ENCODE measurements at regions of chr7 and their contacts with region 1.

Region 1: DNA sequence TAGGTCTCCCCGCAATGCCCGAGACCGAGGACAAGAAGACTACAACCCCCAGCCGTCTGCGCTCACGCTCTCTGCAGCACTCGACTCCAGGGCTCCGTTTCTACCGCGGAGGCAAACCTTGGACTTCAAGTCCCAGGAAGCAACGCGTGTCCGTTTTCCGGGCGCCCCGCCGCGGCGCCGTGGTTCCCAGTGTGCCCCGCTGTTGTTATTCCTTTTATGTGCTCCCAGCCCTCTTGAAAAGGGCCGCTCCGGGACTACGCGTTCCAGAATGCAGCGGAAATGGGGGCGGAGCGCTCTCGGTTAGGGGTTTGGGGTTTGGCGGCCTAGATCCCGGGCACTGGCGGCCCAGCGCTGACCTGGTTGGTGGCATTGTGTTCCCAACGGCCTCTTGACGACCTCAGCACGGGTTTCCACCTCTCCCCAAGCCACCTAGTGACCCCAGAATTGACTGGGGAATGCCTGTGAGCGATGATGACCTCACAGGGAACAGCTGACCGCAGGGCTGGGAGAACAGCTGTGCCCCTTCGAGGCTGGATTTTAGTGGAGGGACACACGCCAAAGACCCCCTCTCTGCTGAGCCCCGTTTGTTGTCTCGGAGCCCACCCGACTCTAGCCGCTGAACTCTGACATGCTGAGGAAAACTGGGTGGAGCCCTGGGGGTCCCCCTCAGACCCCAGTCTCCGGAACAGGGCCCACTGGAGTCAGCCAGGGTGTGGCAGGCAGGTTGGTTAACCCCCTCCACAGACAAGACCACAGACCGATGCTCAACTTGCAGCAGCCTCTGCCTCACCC is 488 bp upstream of the CDK5 start:
- DNase-seq: peak; percentile 95 to 99 (median 98)
- H3K4me3 ChIP-seq: peak overlapping the region; percentile 45 to 70
- H3K4me3 Mint-ChIP-seq: peak overlapping the region; percentile 86 to 97 (median 94)
- H3K27ac ChIP-seq: peak overlapping the region; percentile 85
- H3K27ac Mint-ChIP-seq: peak overlapping the region; percentile 85 to 99 (median 96)
- H3K4me1 ChIP-seq: peaks cover 45% of the 10 kb centered on the region
- H3K4me1 Mint-ChIP-seq: peaks cover 18 to 54% (median 37%) of the 10 kb centered on the region in 4 donors
- H3K27me3 ChIP-seq: no peaks in the 10 kb centered on the region
- H3K27me3 Mint-ChIP-seq: peaks cover 0 to 2% of the 10 kb centered on the region in 2 donors

Region 2: GRCh38 chr7:149714050-149714909 is 1343.9 kb before region 1 on chr7:
- CTCF ChIA-PET with region 1: no interaction called
- POLR2A ChIA-PET with region 1: no interaction called
- intact Hi-C with region 1: loop called (anchors 1 kb)
- DNase-seq: peak; percentile 80 to 90 (median 82)
- H3K4me3 ChIP-seq: peak overlapping the region; percentile 60 to 72
- H3K4me3 Mint-ChIP-seq: peak overlapping the region; percentile 76 to 87 (median 83)
- H3K27ac ChIP-seq: peak overlapping the region; percentile 62
- H3K27ac Mint-ChIP-seq: peak overlapping the region in 5 of 7 donors; percentile 35 to 85 (median 64)
- H3K4me1 ChIP-seq: peaks cover 23% of the 10 kb centered on the region
- H3K4me1 Mint-ChIP-seq: peaks cover 16 to 31% (median 18%) of the 10 kb centered on the region in 4 donors
- H3K27me3 ChIP-seq: no peaks in the 10 kb centered on the region
- H3K27me3 Mint-ChIP-seq: no peaks in the 10 kb centered on the region

Region 3: DNA sequence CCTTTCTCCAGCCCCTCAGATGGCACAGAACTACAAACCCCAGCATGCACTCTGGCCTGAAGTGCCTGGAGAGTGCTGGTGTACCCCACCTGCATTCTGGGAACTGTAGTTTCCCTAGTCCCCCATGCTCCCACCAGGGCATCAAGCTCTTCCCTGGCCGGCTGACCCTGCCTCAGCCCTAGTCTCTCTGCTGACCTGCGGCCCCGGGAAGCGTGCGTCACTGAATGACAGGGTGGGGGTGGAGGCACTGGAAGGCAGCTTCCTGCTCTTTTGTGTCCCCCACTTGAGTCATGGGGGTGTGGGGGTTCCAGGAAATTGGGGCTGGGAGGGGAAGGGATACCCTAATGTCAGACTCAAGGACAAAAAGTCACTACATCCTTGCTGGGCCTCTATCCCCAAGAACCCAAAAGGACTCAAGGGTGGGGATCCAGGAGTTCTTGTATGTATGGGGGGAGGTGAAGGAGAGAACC is 65.3 kb before region 1 on chr7:
- CTCF ChIA-PET with region 1: no interaction called
- POLR2A ChIA-PET with region 1: no interaction called
- intact Hi-C with region 1: no loop called
- DNase-seq: peak in 1 of 5 donors; percentile 29
- H3K4me3 ChIP-seq: no peak overlapping the region
- H3K4me3 Mint-ChIP-seq: no peak overlapping the region
- H3K27ac ChIP-seq: no peak overlapping the region
- H3K27ac Mint-ChIP-seq: peak overlapping the region in 2 of 7 donors; percentile 13 to 75
- H3K4me1 ChIP-seq: peaks cover 43% of the 10 kb centered on the region
- H3K4me1 Mint-ChIP-seq: peaks cover 20 to 58% (median 40%) of the 10 kb centered on the region in 4 donors
- H3K27me3 ChIP-seq: no peaks in the 10 kb centered on the region
- H3K27me3 Mint-ChIP-seq: no peaks in the 10 kb centered on the region

Region 4: GRCh38 chr7:151080522-151081169 is 22.5 kb after region 1 on chr7 and contains the start of gene FASTK:
- CTCF ChIA-PET with region 1: interaction called, 3 read pairs
- POLR2A ChIA-PET with region 1: interaction called, 68 read pairs
- intact Hi-C with region 1: loop called (anchors 1 kb)
- DNase-seq: peak; percentile 86 to 92 (median 89)
- H3K4me3 ChIP-seq: peak within 1 kb of the TSS; percentile 91 to 93
- H3K4me3 Mint-ChIP-seq: peak within 1 kb of the TSS; percentile 85 to 92 (median 89)
- H3K27ac ChIP-seq: peak within 1 kb of the TSS; percentile 90
- H3K27ac Mint-ChIP-seq: peak within 1 kb of the TSS; percentile 72 to 97 (median 91)
- H3K4me1 ChIP-seq: peaks cover 52% of the 10 kb centered on the region
- H3K4me1 Mint-ChIP-seq: peaks cover 23 to 57% (median 36%) of the 10 kb centered on the region in 4 donors
- H3K27me3 ChIP-seq: no peaks in the 10 kb centered on the region
- H3K27me3 Mint-ChIP-seq: no peaks in the 10 kb centered on the region
- total RNA-seq, gene FASTK: 123 to 126 TPM

Region 5: GRCh38 chr7:151226875-151227782 is 168.9 kb after region 1 on chr7 and contains the start of gene ABCF2:
- CTCF ChIA-PET with region 1: no interaction called
- POLR2A ChIA-PET with region 1: no interaction called
- intact Hi-C with region 1: loop called (anchors 2 kb)
- DNase-seq: peak; percentile 94 to 99 (median 95)
- H3K4me3 ChIP-seq: peak within 1 kb of the TSS; percentile 62 to 80
- H3K4me3 Mint-ChIP-seq: peak within 1 kb of the TSS; percentile 95 to 100 (median 96)
- H3K27ac ChIP-seq: peak within 1 kb of the TSS; percentile 83
- H3K27ac Mint-ChIP-seq: peak within 1 kb of the TSS; percentile 95 to 98 (median 96)
- H3K4me1 ChIP-seq: peaks cover 34% of the 10 kb centered on the region
- H3K4me1 Mint-ChIP-seq: peaks cover 29 to 52% (median 40%) of the 10 kb centered on the region in 4 donors
- H3K27me3 ChIP-seq: no peaks in the 10 kb centered on the region
- H3K27me3 Mint-ChIP-seq: no peaks in the 10 kb centered on the region
- total RNA-seq, gene ABCF2: 31.4 to 35.7 TPM

Region 6: DNA sequence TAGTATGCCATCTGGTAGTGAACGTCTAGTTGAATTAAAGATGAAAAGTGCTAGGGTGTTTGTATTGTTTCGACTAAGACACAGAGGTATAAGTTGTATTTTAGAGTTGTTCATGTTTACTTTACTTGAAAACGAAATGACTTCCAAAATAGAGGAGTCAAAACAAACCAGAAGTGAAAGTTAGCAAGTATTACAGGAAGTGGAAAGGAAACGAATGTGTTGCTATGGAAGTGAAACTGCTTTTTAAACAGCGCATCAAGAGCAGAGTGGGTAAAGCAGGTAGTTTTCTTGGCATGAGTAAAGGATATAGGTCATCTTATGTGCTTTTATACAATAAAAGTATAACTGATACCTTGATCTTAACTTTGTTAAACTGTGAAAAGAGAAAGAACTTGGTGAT is 878.0 kb after region 1 on chr7:
- CTCF ChIA-PET with region 1: no interaction called
- POLR2A ChIA-PET with region 1: no interaction called
- intact Hi-C with region 1: no loop called
- DNase-seq: peak in 4 of 5 donors; percentile 60 to 76 (median 68)
- H3K4me3 ChIP-seq: peak overlapping the region in 1 of 2 donors; percentile 8
- H3K4me3 Mint-ChIP-seq: peak overlapping the region; percentile 78 to 94 (median 87)
- H3K27ac ChIP-seq: peak overlapping the region; percentile 54
- H3K27ac Mint-ChIP-seq: peak overlapping the region; percentile 85 to 99 (median 98)
- H3K4me1 ChIP-seq: peaks cover 15% of the 10 kb centered on the region
- H3K4me1 Mint-ChIP-seq: peaks cover 16 to 23% (median 21%) of the 10 kb centered on the region in 4 donors
- H3K27me3 ChIP-seq: no peaks in the 10 kb centered on the region
- H3K27me3 Mint-ChIP-seq: no peaks in the 10 kb centered on the region

Region 7: DNA sequence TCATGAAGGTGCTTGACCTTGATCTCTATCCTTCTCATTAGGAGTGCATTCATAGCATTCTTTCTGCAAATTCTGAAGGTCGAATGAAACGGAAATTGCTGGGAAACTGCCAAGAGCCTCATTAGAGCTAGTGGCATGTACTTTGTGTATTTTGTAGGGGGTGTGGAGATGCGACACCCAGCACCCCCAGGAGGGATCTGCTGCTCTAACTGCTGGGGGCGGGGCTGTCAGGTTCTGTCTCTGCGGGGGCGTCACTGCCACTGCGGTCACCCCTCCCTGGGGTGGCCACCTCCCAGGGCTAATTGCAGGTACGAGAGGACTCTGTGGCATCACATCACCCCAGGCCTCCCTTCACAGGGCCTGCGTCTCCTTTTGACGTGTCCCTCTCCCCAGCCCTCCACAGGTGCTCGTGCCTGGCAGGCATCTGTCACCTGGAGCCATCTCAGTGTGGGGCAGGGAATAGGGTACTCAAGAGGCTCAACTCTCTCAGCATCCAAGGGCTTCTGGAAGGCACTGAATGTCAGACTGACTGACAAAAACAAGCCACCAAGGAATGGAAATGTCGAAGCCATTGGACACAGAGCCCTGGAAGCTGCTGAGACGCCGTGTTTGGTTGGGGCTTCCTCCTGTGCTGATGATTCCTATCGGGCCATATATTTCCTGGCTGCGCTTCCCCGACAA is 1852.5 kb after region 1 on chr7:
- CTCF ChIA-PET with region 1: no interaction called
- POLR2A ChIA-PET with region 1: no interaction called
- intact Hi-C with region 1: no loop called
- DNase-seq: no peak
- H3K4me3 ChIP-seq: no peak overlapping the region
- H3K4me3 Mint-ChIP-seq: no peak overlapping the region
- H3K27ac ChIP-seq: no peak overlapping the region
- H3K27ac Mint-ChIP-seq: no peak overlapping the region
- H3K4me1 ChIP-seq: no peaks in the 10 kb centered on the region
- H3K4me1 Mint-ChIP-seq: no peaks in the 10 kb centered on the region
- H3K27me3 ChIP-seq: no peaks in the 10 kb centered on the region
- H3K27me3 Mint-ChIP-seq: no peaks in the 10 kb centered on the region

Measured in CD4-positive, alpha-beta memory T cell (primary cell).